ENCODE measurements at regions of chr7 and their contacts with region 1.

Region 1: GRCh38 chr7:68176974-68177373 is 1180.3 kb downstream of the TYW1 start:
- DNase-seq: peak in 1 of 3 donors; percentile 2
- H3K4me3 ChIP-seq: no peak overlapping the region
- H3K4me3 Mint-ChIP-seq: no peak overlapping the region
- H3K27ac ChIP-seq: no peak overlapping the region
- H3K27ac Mint-ChIP-seq: no peak overlapping the region
- H3K4me1 ChIP-seq: no peaks in the 10 kb centered on the region
- H3K4me1 Mint-ChIP-seq: no peaks in the 10 kb centered on the region
- H3K27me3 ChIP-seq: no peaks in the 10 kb centered on the region
- H3K27me3 Mint-ChIP-seq: no peaks in the 10 kb centered on the region
- CTCF ChIP-seq: peak; percentile 36

Region 2: DNA sequence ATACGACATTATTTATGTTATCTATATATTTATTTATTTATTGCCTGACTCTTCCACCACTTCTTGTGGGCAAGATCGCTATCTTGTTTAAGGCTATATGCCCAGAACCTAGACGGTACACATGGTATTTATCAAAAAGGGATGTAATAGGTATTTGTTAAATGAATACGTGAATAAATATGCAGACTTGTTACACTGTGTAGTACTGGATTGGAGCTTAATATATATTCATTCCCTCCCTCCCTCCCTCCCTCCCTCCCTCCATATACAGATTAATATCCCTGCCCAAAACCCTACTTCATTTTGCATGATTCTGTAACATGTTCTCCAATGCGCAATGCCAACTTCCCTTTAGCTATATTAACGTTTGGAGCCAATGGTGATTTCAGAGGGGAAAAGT is 147.6 kb after region 1 on chr7:
- intact Hi-C with region 1: no loop called
- DNase-seq: no peak
- H3K4me3 ChIP-seq: no peak overlapping the region
- H3K4me3 Mint-ChIP-seq: no peak overlapping the region
- H3K27ac ChIP-seq: no peak overlapping the region
- H3K27ac Mint-ChIP-seq: no peak overlapping the region
- H3K4me1 ChIP-seq: no peaks in the 10 kb centered on the region
- H3K4me1 Mint-ChIP-seq: no peaks in the 10 kb centered on the region
- H3K27me3 ChIP-seq: no peaks in the 10 kb centered on the region
- H3K27me3 Mint-ChIP-seq: peaks cover 0 to 3% (median 2%) of the 10 kb centered on the region in 3 donors
- CTCF ChIP-seq: no peak

Region 3: GRCh38 chr7:69932034-69932628 is 1755.2 kb after region 1 on chr7:
- intact Hi-C with region 1: loop called in 1 of 2 experiments (anchors 10 kb)
- DNase-seq: no peak
- H3K4me3 ChIP-seq: no peak overlapping the region
- H3K4me3 Mint-ChIP-seq: no peak overlapping the region
- H3K27ac ChIP-seq: no peak overlapping the region
- H3K27ac Mint-ChIP-seq: no peak overlapping the region
- H3K4me1 ChIP-seq: no peaks in the 10 kb centered on the region
- H3K4me1 Mint-ChIP-seq: no peaks in the 10 kb centered on the region
- H3K27me3 ChIP-seq: no peaks in the 10 kb centered on the region
- H3K27me3 Mint-ChIP-seq: peaks cover 0 to 4% (median 0%) of the 10 kb centered on the region in 3 donors
- CTCF ChIP-seq: peak; percentile 11